ENCODE measurements at regions of chr19 and their contacts with region 1.

Region 1: DNA sequence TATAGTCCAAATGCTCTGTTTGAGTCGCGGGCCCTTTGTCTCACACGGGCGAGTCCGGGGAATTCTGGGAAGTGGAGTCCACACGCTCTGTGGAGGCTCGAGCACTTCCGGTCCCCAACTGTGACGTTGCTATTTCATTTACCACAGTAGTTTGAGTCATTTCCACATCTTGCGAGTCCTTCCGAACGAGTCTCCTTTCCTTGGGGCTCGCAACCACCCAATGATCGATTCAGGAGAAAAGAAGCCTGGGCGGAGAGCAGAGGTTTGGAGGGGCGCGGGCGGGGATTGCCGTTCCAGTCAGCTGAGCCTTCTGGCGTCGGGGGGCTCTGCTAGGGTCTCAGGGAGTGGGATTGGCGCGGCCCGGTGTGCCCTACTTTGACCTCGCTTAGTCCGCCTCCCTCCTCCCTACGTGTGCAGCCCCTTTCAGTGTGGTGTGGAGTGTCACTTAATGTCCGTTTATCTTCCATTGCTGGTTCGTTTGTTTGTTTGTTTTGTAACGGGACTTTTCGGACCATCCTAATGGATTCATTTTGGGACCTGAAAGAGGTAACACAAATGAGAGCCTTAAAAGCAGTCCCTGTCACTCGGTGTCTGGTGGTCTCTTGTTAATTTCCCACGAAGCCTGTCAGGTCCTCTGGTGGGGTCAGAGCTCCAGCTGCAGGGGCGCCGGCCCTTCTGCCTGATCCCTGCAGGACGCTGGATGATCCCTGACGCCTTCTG is at the start of gene ZNF222:
- DNase-seq: peak; percentile 92
- H3K4me3 Mint-ChIP-seq: peak within 1 kb of the TSS; percentile 87
- H3K27ac Mint-ChIP-seq: peak within 1 kb of the TSS; percentile 77
- H3K4me1 Mint-ChIP-seq: peaks cover 15% of the 10 kb centered on the region
- H3K27me3 Mint-ChIP-seq: no peaks in the 10 kb centered on the region
- total RNA-seq, gene ZNF222: 0.74 to 1.1 TPM

Region 2: GRCh38 chr19:43799502-43800142 is 225.8 kb before region 1 on chr19:
- CTCF ChIA-PET with region 1: no interaction called
- intact Hi-C with region 1: no loop called
- DNase-seq: no peak
- H3K4me3 Mint-ChIP-seq: no peak overlapping the region
- H3K27ac Mint-ChIP-seq: no peak overlapping the region
- H3K4me1 Mint-ChIP-seq: peaks cover 11% of the 10 kb centered on the region
- H3K27me3 Mint-ChIP-seq: peaks cover 6% of the 10 kb centered on the region

Region 3: DNA sequence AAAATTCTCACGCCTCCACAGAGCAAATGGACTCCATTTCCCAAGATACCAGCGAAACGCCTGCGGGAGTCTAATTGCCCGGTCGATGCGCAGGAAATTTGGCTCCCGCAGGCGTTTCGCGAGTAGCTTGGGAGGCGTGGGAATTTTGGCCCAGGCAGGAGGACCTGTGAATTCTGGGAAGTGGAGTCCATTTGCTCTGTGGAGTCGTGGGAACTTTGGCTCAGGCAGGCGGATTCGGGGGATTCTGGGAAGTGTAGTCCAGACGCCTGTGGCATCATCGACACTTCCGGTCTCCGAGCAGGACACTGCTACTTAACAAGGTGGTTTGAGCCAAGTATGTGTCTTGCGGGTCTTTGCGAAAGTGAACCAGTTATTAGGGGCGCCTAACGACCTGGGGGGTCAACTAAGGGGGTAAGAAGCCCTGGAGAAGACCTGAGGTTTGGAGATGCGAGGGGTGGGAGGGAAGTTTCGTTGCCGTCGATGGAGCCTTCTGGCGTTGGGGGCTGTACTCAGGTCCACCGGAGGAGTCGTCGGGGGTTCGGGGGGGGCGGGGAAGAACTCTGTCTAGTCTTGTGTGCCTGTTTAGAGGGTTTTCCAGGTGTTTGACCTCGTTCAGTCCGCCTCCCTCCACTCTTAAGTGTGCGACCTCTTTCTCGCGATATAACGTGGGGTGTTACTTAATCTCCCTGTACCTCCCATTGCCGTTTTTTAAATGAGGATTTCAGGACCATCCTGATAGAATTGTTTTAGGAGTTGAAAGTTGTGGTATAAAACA is 41.3 kb before region 1 on chr19 and contains the start of gene ZNF155:
- CTCF ChIA-PET with region 1: no interaction called
- intact Hi-C with region 1: loop called (anchors 1 kb)
- DNase-seq: peak; percentile 83
- H3K4me3 Mint-ChIP-seq: peak within 1 kb of the TSS; percentile 98
- H3K27ac Mint-ChIP-seq: peak within 1 kb of the TSS; percentile 91
- H3K4me1 Mint-ChIP-seq: peaks cover 8% of the 10 kb centered on the region
- H3K27me3 Mint-ChIP-seq: no peaks in the 10 kb centered on the region
- total RNA-seq, gene ZNF155: 2.9 to 3.1 TPM

Region 4: DNA sequence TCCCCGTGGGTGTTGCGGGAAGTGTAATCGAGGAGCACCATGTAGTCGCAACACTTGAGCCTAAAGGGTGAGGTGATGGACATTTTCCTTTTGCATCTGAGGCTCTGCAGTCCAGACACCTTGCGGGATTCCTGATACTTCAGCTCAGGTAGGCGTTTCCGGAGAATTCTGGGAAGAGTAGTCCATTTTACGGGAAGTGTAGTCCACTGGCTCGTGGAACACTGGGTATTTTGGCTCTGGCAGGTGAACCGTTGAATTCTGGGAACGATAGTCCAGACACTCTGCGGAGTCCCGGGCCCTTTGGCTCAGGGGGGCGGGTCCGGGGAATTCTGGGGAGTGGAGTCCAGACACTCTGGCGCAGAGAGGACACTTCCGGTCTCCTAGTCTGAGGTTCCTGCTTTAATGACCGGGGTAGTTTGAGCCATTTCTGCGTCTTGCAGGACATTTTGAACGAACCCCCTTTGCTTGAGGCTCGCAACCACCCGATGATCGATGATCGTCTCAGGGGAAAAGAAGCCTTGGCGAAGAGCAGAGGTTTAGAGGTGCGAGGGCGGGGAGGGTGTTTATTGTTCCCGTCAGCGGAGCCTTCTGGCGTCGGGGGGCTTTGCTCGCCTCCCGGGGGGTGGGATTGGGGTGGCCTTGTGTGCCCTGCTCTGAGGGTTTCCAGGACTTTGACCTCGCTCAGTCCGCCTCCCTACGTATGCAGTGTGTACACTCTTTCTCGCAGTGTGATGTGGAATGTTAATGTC is 26.5 kb after region 1 on chr19 and contains the start of gene ZNF223:
- CTCF ChIA-PET with region 1: no interaction called
- intact Hi-C with region 1: loop called (anchors 2 kb)
- DNase-seq: peak; percentile 75
- H3K4me3 Mint-ChIP-seq: peak within 1 kb of the TSS; percentile 82
- H3K27ac Mint-ChIP-seq: peak within 1 kb of the TSS; percentile 73
- H3K4me1 Mint-ChIP-seq: peaks cover 18% of the 10 kb centered on the region
- H3K27me3 Mint-ChIP-seq: no peaks in the 10 kb centered on the region
- total RNA-seq, gene ZNF223: 0.48 to 0.96 TPM

Region 5: GRCh38 chr19:44182145-44182544 is 156.8 kb after region 1 on chr19:
- CTCF ChIA-PET with region 1: no interaction called
- intact Hi-C with region 1: no loop called
- DNase-seq: no peak
- H3K4me3 Mint-ChIP-seq: no peak overlapping the region
- H3K27ac Mint-ChIP-seq: no peak overlapping the region
- H3K4me1 Mint-ChIP-seq: no peaks in the 10 kb centered on the region
- H3K27me3 Mint-ChIP-seq: no peaks in the 10 kb centered on the region

Region 6: DNA sequence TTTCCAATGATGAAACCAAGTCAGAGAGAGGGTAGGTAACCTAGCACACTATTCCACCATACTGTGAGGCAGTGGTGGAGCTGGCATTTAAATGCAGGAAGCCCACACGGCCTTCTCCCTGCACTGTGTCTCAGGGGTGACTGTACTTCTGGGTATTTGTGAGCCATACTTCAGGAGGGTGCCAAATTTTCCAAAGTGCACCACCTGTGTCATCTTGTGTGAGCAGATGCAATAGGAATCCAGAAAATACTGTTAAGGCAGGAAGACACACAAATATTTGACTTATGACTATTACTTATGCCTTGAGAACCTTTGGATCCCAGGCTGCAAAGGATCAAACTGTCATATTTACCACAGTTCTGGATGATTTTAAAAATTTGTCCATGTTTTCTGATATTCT is 405.6 kb after region 1 on chr19:
- CTCF ChIA-PET with region 1: no interaction called
- intact Hi-C with region 1: no loop called
- DNase-seq: no peak
- H3K4me3 Mint-ChIP-seq: no peak overlapping the region
- H3K27ac Mint-ChIP-seq: no peak overlapping the region
- H3K4me1 Mint-ChIP-seq: no peaks in the 10 kb centered on the region
- H3K27me3 Mint-ChIP-seq: no peaks in the 10 kb centered on the region